ENCODE measurements at regions of chr16 and their contacts with region 1.

Region 1: GRCh38 chr16:10743610-10744393 is at the start of gene NUBP1:
- DNase-seq: peak; percentile 94
- ATAC-seq: peak; percentile 93
- H3K4me3 ChIP-seq: peak within 1 kb of the TSS; percentile 69
- H3K27ac ChIP-seq: peak within 1 kb of the TSS; percentile 74
- H3K4me1 ChIP-seq: peaks cover 39% of the 10 kb centered on the region
- H3K27me3 ChIP-seq: no peaks in the 10 kb centered on the region
- CTCF ChIP-seq: peak in 1 of 3 experiments; percentile 8; a peak in 1 of 6 replicates
- EP300 ChIP-seq: 0 out of 4 replicates have a peak, but pooled peaks of 1 of the 2 experiments have one; percentile 4
- POLR2A ChIP-seq: peak; percentile 96
- RAD21 ChIP-seq: no peak
- polyA plus RNA-seq, gene NUBP1: 31.0 to 36.3 TPM

Region 2: GRCh38 chr16:10729104-10730048 is 14.4 kb before region 1 on chr16:
- CTCF ChIA-PET with region 1: no interaction called
- POLR2A ChIA-PET with region 1: no interaction called
- RAD21 ChIA-PET with region 1: no interaction called
- SMC1A ChIA-PET with region 1: no interaction called
- in situ Hi-C with region 1: no loop called
- intact Hi-C with region 1: no loop called
- DNase-seq: no peak
- ATAC-seq: no peak
- H3K4me3 ChIP-seq: no peak overlapping the region
- H3K27ac ChIP-seq: no peak overlapping the region
- H3K4me1 ChIP-seq: no peaks in the 10 kb centered on the region
- H3K27me3 ChIP-seq: no peaks in the 10 kb centered on the region
- CTCF ChIP-seq: no peak
- EP300 ChIP-seq: no peak
- POLR2A ChIP-seq: no peak
- RAD21 ChIP-seq: no peak

Region 3: GRCh38 chr16:10770907-10771306 is 27.1 kb after region 1 on chr16:
- CTCF ChIA-PET with region 1: interaction called, 7 read pairs
- POLR2A ChIA-PET with region 1: interaction called, 14 read pairs
- RAD21 ChIA-PET with region 1: interaction called, 8 read pairs
- SMC1A ChIA-PET with region 1: interaction called, 8 read pairs
- in situ Hi-C with region 1: no loop called
- intact Hi-C with region 1: loop called (anchors 1 kb)
- DNase-seq: no peak
- ATAC-seq: no peak
- H3K4me3 ChIP-seq: no peak overlapping the region
- H3K27ac ChIP-seq: no peak overlapping the region
- H3K4me1 ChIP-seq: peaks cover 17% of the 10 kb centered on the region
- H3K27me3 ChIP-seq: no peaks in the 10 kb centered on the region
- CTCF ChIP-seq: no peak
- EP300 ChIP-seq: no peak
- POLR2A ChIP-seq: no peak
- RAD21 ChIP-seq: no peak

Region 4: GRCh38 chr16:10835281-10835931 is 91.6 kb after region 1 on chr16:
- CTCF ChIA-PET with region 1: interaction called, 4 read pairs
- POLR2A ChIA-PET with region 1: interaction called, 8 read pairs
- RAD21 ChIA-PET with region 1: interaction called, 10 read pairs
- SMC1A ChIA-PET with region 1: interaction called, 6 read pairs
- in situ Hi-C with region 1: no loop called
- intact Hi-C with region 1: no loop called
- DNase-seq: peak; percentile 84
- ATAC-seq: peak; percentile 76
- H3K4me3 ChIP-seq: no peak overlapping the region
- H3K27ac ChIP-seq: peak overlapping the region; percentile 33
- H3K4me1 ChIP-seq: peaks cover 49% of the 10 kb centered on the region
- H3K27me3 ChIP-seq: no peaks in the 10 kb centered on the region
- CTCF ChIP-seq: no peak
- EP300 ChIP-seq: peak; percentile 86 to 89
- POLR2A ChIP-seq: no peak
- RAD21 ChIP-seq: no peak; the same call in 1 of the 2 replicates

Region 5: DNA sequence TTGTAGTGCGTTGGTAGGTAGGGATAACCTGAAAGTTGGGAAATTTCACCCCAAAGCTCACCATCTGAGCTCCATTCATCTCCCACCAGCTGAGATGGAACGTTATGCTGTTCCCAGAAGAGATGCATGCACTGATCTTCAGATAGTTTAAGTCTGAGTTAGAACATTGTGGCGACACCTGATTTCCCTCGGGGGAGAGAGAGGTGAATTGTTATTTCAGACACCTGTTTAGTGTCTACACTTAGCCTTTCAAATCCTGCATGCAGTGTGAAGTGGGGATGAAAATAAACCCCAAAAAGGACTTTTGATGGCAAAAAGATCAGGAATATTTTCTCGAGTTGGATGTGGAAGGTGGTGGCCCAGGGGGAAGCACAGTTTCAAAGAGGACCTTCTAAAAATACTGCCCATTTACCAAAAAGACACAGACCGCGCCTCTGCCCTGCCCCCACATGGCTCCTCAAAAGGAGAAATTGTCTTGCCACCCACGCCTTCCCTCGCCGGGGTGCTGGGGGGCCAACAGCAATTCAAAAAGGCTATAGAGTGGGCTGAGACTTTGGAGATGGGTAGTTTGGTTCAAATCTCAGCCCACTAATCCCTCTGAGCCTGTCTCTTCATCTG is 144.6 kb after region 1 on chr16:
- CTCF ChIA-PET with region 1: interaction called, 5 read pairs
- POLR2A ChIA-PET with region 1: interaction called, 10 read pairs
- RAD21 ChIA-PET with region 1: interaction called, 31 read pairs
- SMC1A ChIA-PET with region 1: interaction called, 38 read pairs
- in situ Hi-C with region 1: no loop called
- intact Hi-C with region 1: no loop called
- DNase-seq: no peak
- ATAC-seq: peak; percentile 7; the same call in 1 of the 3 replicates
- H3K4me3 ChIP-seq: peak overlapping the region; percentile 67
- H3K27ac ChIP-seq: peak overlapping the region; percentile 59
- H3K4me1 ChIP-seq: peaks cover 96% of the 10 kb centered on the region
- H3K27me3 ChIP-seq: no peaks in the 10 kb centered on the region
- CTCF ChIP-seq: no peak
- EP300 ChIP-seq: no peak; a peak in 1 of 4 replicates
- POLR2A ChIP-seq: no peak
- RAD21 ChIP-seq: 0 out of 2 replicates have a peak, but pooled peaks have one; percentile 17

Measured in GM12878 (cell line).